A673 (cell line): ENCODE measurements at regions of chr17 and their contacts with region 1.

Region 1: DNA sequence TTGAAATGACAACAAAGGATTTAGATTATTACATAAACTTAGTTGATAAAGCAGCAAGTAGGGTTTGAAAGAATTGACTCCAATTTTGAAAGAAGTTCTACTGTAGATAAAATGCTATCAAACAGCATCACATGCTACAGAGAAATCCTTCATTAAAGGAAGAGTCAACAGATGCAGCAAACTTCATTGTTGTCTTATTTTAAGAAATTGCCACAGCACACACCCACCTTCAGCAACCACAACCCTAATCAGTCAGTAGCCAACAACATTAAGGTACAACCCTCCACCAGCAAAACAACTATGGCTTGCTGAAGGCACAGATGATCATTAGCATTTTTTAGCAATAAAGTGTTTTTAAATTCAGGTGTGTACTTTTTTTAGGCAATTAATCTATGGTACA is 75.1 kb upstream of the NSRP1 start:
- DNase-seq: no peak
- H3K4me3 ChIP-seq: no peak overlapping the region
- H3K27ac ChIP-seq: peak overlapping the region; percentile 89
- H3K4me1 ChIP-seq: peaks cover 21% of the 10 kb centered on the region
- H3K27me3 ChIP-seq: no peaks in the 10 kb centered on the region
- CTCF ChIP-seq: no peak

Region 2: DNA sequence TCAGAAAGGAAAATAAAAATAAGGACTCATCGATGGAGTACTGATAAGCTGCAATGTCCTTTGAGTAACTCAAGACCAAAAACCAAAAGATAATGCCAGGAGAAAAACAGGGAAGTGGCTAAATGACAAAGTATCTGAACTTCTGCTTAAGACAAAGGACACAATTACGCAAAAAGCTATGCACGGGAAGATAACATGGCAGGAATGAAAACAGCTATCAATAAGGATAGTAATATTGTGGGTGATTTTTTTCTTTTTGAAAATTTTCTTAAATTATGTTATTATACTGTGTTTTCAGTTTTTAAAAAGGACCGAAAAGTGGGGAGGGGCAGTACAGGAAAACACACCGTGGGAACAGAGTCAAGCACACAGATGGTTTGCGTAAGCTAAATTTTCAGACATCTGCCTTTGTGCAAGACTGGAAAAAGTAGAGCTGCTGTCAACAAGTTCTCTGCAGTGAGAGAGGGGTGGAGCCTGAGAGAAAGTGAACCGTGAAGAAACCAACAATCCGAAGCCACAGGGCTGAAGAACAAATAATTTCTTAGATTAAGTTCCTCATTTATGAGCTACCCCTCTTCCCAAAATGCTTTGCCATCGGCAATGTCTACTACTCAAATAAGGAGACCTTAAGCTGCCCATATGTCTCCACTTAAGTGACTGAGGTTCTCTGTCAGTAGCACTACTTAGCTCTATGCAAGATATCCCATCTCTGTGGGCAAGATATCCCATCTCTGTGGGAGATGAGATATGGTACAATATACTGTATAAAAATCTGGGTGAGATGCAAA is 318.9 kb before region 1 on chr17:
- CTCF ChIA-PET with region 1: no interaction called
- POLR2A ChIA-PET with region 1: no interaction called
- intact Hi-C with region 1: loop called (anchors 10 kb)
- DNase-seq: peak; percentile 87
- H3K4me3 ChIP-seq: peak overlapping the region; percentile 26
- H3K27ac ChIP-seq: peak overlapping the region; percentile 90
- H3K4me1 ChIP-seq: peaks cover 76% of the 10 kb centered on the region
- H3K27me3 ChIP-seq: no peaks in the 10 kb centered on the region
- CTCF ChIP-seq: no peak

Region 3: DNA sequence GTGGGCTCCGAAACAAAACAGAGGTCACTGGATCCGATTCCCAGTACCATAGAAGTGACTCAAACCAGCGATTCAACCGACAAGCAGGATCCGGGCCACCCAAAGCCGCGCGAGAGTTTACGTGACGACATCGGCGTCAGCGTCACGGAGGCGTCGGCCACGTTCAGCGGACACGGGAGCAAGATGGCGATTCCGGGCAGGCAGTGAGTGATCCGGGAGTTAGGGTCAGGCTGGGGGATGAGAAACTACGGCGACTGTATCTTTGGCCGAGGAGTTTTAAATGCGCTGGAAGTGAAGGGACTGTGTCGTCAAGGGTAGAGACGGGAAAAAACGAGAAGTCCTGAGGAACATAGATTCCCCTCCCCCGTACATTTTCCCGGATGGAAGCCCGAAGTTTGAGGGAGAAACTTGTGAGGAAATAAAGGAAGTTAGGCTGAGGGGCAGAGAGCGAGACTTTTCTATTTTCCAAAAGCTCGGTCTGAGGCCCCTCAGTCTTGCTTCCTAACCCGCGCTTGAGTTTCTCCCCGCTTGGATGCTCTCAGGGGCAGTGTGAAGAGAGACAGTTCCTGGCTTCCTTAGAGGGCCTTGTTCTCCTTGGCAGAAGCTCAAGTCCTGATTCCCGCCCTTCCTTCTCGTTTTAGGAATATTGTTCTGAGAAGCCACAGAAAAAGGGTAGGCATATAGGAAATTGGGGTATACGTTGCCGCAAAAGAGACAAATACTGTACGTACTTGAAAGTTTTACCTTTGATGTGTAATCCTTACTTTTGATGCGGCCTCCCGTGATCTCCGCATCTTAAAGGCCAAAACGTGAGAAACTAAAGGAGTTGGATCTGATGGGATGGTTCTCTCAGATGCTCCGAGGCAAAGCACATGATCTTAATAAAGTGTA is 75.4 kb after region 1 on chr17 and contains the start of gene NSRP1:
- CTCF ChIA-PET with region 1: no interaction called
- POLR2A ChIA-PET with region 1: no interaction called
- intact Hi-C with region 1: no loop called
- DNase-seq: peak; percentile 98
- H3K4me3 ChIP-seq: peak within 1 kb of the TSS; percentile 78
- H3K27ac ChIP-seq: peak within 1 kb of the TSS; percentile 97
- H3K4me1 ChIP-seq: peaks cover 22% of the 10 kb centered on the region
- H3K27me3 ChIP-seq: no peaks in the 10 kb centered on the region
- CTCF ChIP-seq: no peak
- total RNA-seq, gene NSRP1: 43.5 and 50.5 TPM in 2 replicates